Head of caudate nucleus (tissue), 42 donors: ENCODE measurements at regions of chr9 and their contacts with region 1.

Region 1: DNA sequence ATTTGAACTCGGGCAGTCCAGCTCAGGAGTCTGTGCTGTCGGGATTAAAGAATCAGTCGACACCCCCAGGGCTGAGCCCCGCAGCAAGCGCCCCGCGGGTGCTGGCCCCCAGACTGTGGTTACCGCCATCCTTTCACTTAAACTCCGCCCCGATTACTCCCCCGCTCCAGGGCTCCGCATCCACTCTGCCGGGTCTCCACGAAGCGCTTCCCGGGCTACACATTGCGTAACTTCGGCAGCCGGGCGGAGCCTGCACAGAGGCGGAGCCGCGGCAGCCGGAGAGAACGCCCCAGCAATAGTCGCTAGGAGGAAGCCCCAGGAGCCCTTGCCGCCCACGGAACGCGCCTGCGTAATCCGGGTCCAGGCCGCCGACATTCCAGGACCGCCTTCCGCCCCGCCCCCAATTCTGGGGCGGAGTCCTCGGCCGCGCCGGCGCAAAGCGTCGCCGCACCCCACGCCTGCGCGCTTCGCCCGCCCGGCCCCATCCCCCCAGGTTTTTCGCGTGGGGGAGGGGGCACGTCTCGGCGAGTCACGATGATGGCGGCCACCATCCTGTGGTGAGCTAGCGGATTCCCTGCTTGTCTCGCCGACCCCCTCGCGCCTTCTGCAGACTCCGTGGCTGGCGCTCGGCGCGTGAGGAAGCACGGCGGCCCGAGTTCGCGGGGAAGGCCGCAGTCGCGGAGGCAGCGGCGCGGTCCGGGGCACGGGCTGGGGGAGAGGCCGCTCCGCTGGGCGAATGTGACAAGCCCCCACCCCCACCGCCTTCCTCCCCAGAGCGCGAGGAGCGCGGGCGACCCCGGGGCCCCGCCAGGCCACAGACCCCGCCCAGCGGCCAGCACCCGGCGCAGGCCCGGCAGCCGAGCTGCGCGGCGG is at the start of gene RAD23B:
- DNase-seq: peak; percentile 93 to 99 (median 98)

Region 2: DNA sequence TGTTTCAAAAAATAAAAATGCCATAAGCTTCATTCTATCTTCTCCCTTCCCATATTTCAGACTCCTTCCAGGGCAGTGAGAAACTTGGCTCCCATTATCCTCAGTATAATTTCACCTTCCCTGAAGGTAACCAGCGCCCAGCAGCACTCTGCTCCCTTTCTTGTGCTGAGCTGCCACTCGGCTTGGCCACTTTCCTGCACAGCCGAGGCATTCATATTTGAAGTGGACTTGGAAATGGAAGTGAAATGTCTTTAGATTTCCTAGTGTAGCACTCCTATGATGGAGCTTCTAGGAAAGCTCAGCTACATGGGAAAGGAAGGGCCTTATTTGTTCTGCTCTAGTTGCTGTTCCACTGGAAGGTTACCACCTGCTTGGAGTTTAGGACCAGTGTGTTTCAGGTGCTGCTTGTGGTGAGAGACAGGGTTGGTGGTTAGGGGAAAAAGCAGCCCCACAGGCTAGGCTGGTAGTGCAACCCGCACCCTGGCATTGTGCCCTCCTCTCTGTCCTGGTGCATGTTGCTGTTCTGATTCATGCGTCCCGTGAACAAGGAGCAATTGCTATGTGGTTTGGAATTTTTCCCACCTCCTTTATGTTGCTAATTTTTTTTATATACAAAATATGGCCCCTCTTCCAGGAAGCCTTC is 53.9 kb after region 1 on chr9:
- intact Hi-C with region 1: loop called (anchors 10 kb)
- DNase-seq: peak in 23 of 42 donors; percentile 22 to 76 (median 32)